ENCODE measurements at regions of chr6 and their contacts with region 1.

Region 1: DNA sequence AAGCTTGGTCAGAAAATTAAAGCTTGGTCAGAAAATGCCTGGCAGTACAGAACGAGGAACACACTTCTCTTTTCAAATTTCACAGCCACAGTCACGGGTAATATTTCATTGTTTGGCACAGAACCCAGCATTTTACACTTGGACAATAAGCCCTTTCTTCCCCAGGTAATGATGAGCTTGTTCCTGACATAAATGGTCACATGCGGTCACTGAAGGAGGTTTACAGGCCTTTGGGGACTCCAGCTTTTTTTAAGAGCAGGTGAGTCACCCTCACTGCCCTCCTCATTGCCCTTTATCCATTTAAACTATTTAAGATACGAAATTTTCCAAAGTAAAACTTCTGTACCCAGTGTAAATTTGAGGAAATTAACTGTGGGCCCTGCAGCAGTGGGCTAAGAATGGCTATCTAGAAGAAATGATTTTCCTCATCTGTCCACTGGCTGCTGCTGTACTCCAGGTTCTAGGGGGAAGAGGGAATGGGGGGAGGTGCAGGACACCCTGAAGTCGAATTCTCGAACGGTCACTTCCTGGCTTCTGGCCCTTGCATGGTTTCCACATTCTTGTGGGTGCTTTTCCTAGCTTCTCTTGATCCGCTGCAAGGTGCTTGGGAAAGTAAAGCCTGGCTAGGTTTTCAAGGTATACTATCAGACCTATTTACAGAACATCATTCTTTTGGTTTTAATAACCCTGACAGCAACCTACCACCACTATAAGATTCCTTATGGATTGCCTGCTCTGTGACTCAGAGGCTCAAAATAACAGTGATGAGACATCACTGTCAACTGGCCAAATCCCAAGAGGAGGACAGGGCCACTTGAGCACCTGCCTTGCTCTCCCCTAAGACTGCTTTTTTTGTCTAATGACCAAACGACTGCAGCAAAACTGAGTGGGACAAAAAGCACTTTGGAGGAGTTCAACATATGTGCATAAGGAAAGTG is 75.8 kb downstream of the PREP start:
- DNase-seq: no peak
- H3K4me3 Mint-ChIP-seq: no peak overlapping the region
- H3K27ac Mint-ChIP-seq: no peak overlapping the region
- H3K4me1 Mint-ChIP-seq: no peaks in the 10 kb centered on the region
- H3K27me3 Mint-ChIP-seq: no peaks in the 10 kb centered on the region

Region 2: DNA sequence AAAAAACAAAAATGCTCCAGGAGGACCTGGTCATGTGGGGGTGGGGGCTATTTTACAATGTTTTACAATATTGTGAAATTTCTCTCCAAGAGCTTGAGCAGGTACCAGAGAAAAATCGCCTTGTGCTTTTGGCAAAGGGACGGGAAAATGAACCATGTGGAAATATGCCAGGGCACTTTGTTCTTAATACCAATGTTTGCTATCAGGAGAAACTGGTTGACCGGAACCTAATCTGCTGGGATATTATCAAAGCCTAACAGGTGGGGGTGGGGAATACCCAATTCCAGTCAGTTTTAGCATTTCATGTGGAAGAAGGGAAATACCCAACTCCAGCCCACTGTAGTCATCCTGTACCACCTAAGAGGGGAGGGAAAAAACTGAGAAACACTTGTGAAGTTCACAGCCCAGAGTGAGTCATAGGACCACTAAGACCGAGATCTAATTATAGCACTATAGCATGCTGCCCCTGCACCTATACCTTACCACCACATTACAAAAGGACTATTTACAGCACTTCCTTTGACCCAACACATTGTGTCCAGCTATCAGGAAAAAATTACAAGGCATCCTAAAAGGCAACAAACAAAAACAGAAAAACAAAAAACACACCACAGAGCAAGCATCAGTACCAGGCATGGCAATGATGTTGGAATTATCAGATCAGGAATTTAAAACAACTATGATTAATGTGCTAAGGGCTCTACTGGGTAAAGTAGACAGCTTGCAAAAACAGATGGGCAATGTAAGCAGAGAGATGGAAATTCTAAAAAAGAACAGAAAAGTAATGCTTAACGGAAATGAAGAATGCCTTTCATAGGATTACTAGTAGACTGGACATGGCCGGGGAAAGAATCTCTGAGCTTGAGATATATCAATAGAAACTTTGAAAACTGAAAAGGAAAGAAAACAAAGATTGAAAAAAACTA is 63.2 kb before region 1 on chr6:
- CTCF ChIA-PET with region 1: no interaction called
- intact Hi-C with region 1: no loop called
- DNase-seq: no peak
- H3K4me3 Mint-ChIP-seq: no peak overlapping the region
- H3K27ac Mint-ChIP-seq: no peak overlapping the region
- H3K4me1 Mint-ChIP-seq: peaks cover 2% of the 10 kb centered on the region
- H3K27me3 Mint-ChIP-seq: peaks cover 7% of the 10 kb centered on the region

Region 3: DNA sequence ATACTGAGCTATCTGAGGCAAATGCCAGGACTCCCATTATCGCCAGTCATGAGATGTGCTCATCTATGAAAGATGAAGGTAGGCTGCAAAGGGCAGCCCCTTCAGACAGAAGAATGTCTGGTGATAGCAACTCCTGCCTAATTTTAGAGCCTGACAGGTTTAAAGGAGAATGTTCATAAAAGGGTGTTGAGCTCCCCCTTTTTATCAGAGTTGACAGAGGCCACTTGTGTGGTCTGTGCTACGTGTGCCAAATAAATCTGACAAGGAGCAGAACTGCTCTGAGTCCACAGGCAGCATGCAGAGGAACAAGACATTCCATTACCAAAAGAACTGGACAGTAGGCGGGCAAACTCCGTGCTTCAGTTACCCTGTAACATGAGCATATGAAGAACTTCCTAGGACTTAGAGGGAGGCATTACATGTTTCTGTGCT is 26.0 kb before region 1 on chr6:
- CTCF ChIA-PET with region 1: interaction called, 11 read pairs
- intact Hi-C with region 1: no loop called
- DNase-seq: no peak
- H3K4me3 Mint-ChIP-seq: no peak overlapping the region
- H3K27ac Mint-ChIP-seq: no peak overlapping the region
- H3K4me1 Mint-ChIP-seq: peaks cover 2% of the 10 kb centered on the region
- H3K27me3 Mint-ChIP-seq: no peaks in the 10 kb centered on the region

Region 4: GRCh38 chr6:105346052-105346451 is 18.9 kb after region 1 on chr6:
- CTCF ChIA-PET with region 1: no interaction called
- intact Hi-C with region 1: no loop called
- DNase-seq: no peak
- H3K4me3 Mint-ChIP-seq: no peak overlapping the region
- H3K27ac Mint-ChIP-seq: no peak overlapping the region
- H3K4me1 Mint-ChIP-seq: peaks cover 3% of the 10 kb centered on the region
- H3K27me3 Mint-ChIP-seq: no peaks in the 10 kb centered on the region

Region 5: DNA sequence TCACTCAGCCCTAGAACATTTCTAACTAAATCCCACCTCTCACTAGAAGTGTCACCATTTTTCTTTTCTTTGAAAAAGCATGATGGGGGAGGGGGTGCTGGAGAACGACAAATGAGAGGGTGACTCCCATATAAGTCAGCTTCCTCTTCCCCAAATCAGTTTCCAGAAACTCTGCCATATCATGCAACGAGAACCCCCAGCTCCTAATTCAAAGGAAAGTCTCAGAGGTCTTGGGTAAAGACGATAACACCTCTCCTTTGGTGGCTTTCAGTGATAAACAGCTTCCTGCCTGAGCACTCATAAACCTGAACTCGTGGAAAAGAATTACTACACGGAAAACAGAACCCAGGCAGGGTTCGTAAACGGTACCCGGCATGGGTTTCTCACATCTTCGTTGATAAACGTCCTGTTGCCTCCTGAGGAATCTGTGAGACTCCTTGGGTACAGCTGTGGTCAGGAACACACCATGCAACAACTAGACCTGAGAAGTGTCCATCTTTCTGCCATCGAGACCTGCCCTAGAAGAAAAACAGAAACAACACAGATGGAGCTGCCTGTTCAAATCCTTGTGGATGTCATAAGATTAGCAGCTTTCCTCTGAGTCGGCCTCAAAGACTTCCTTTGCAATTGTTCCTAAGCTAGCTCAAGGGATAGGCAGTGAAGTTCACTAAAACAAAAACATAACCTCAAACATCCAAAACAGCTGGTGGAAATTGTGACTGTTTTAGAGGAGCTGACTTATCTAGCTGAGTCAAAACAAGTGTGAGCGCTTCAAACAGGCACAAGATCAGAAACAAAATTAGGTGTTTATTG is 573.2 kb after region 1 on chr6:
- CTCF ChIA-PET with region 1: no interaction called
- intact Hi-C with region 1: no loop called
- DNase-seq: peak; percentile 52
- H3K4me3 Mint-ChIP-seq: peak overlapping the region; percentile 45
- H3K27ac Mint-ChIP-seq: peak overlapping the region; percentile 73
- H3K4me1 Mint-ChIP-seq: peaks cover 16% of the 10 kb centered on the region
- H3K27me3 Mint-ChIP-seq: peaks cover 4% of the 10 kb centered on the region

Region 6: GRCh38 chr6:107304421-107305025 is 1977.4 kb after region 1 on chr6:
- CTCF ChIA-PET with region 1: no interaction called
- intact Hi-C with region 1: no loop called
- DNase-seq: peak; percentile 58
- H3K4me3 Mint-ChIP-seq: no peak overlapping the region
- H3K27ac Mint-ChIP-seq: no peak overlapping the region
- H3K4me1 Mint-ChIP-seq: peaks cover 12% of the 10 kb centered on the region
- H3K27me3 Mint-ChIP-seq: no peaks in the 10 kb centered on the region